ENCODE measurements at regions of chr3 and their contacts with region 1.

Region 1: GRCh38 chr3:86109434-86109833 is 881.5 kb downstream of the VGLL3 start:
- DNase-seq: no peak
- ATAC-seq: no peak
- H3K4me3 ChIP-seq: no peak overlapping the region
- H3K27ac ChIP-seq: no peak overlapping the region
- H3K4me1 ChIP-seq: no peaks in the 10 kb centered on the region
- H3K27me3 ChIP-seq: no peaks in the 10 kb centered on the region
- CTCF ChIP-seq: no peak

Region 2: GRCh38 chr3:85881833-85882393 is 227.5 kb before region 1 on chr3:
- intact Hi-C with region 1: no loop called
- DNase-seq: no peak
- ATAC-seq: no peak
- H3K4me3 ChIP-seq: no peak overlapping the region
- H3K27ac ChIP-seq: no peak overlapping the region
- H3K4me1 ChIP-seq: no peaks in the 10 kb centered on the region
- H3K27me3 ChIP-seq: no peaks in the 10 kb centered on the region
- CTCF ChIP-seq: no peak

Region 3: GRCh38 chr3:86921971-86922680 is 812.7 kb after region 1 on chr3:
- intact Hi-C with region 1: no loop called
- DNase-seq: no peak
- ATAC-seq: no peak
- H3K4me3 ChIP-seq: no peak overlapping the region
- H3K27ac ChIP-seq: peak overlapping the region in 2 of 10 donors; percentile 1 to 2
- H3K4me1 ChIP-seq: no peaks in the 10 kb centered on the region
- H3K27me3 ChIP-seq: no peaks in the 10 kb centered on the region
- CTCF ChIP-seq: no peak

Region 4: DNA sequence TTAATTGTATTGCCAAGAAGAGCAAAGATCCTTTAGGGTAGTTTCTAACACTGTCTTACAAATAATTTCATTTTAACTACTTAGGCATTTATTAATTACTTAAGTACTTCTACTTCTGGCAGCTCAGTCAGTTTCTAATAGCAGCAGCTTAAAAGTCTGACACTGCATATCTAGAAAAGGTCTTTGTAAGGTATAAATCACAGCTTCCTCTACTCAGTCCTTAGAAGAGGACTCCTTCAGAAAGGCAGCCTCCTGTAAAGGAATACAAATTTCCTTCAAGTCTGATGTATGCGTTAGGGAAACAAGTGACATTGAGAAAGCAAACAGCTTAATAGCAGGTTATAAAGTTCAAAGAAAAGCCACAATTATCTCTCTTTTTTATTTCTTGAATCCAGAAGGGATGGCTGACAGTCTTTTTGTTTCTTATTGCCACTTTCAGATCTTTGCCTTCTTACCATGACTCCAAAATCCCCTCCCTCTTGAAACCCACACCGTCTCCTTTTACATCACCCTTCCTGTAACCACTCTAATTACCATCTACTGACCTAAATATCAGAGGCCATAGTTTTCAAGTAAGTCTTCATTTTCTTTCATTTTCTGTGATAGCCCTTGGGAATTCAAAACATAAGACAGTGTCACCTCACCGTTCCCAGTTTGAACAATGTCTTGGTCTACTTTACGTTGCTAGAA is 1839.9 kb after region 1 on chr3:
- intact Hi-C with region 1: loop called in 1 of 10 experiments (anchors 10 kb)
- DNase-seq: no peak
- ATAC-seq: no peak
- H3K4me3 ChIP-seq: no peak overlapping the region
- H3K27ac ChIP-seq: no peak overlapping the region
- H3K4me1 ChIP-seq: no peaks in the 10 kb centered on the region
- H3K27me3 ChIP-seq: no peaks in the 10 kb centered on the region
- CTCF ChIP-seq: no peak

Measured in heart right ventricle (tissue), 16 donors.